Activated CD4-positive, alpha-beta memory T cell treated with anti-CD3 and anti-CD28 coated beads for 36 hours (primary cell): ENCODE measurements at regions of chr11 and their contacts with region 1.

Region 1: DNA sequence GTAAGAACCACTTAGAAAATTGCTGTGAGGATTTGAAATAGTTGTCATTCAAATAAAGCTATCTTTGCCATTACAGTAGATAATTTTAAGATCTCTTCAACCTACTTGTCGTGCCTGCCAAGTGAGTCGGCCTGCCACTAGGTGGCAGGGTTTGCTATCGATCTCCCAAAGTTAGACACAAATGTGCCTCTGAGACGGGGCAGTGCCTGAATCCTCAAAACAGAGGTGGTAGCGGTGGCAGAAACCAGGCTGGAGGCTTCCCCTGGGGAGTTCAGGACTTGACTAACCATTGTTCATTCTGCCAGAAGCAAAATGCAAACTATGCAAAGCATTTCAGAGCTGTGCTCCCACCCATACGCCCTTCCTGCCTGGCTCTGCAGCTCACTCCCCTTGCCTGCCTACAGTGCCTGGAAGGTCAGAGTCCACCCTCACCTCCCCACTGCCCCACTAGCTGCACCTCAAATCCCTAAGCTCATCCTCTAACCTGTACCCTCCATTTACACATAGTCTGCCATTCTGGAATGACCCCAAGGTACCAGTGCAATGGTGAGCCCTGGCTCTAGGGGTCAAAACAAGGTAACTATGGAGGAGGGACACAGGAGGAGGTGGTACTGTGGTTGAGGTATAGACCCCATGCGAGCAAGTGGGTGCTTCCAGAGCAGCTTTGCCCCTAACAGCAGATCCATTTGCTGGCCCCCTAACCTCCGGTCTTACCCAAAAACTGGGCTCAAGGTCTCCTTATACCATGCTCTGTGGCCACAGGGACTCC is 82.1 kb downstream of the C11orf58 start:
- DNase-seq: peak; percentile 87
- H3K4me3 Mint-ChIP-seq: no peak overlapping the region
- H3K27ac Mint-ChIP-seq: no peak overlapping the region
- H3K4me1 Mint-ChIP-seq: peaks cover 2% of the 10 kb centered on the region
- H3K27me3 Mint-ChIP-seq: no peaks in the 10 kb centered on the region

Region 2: DNA sequence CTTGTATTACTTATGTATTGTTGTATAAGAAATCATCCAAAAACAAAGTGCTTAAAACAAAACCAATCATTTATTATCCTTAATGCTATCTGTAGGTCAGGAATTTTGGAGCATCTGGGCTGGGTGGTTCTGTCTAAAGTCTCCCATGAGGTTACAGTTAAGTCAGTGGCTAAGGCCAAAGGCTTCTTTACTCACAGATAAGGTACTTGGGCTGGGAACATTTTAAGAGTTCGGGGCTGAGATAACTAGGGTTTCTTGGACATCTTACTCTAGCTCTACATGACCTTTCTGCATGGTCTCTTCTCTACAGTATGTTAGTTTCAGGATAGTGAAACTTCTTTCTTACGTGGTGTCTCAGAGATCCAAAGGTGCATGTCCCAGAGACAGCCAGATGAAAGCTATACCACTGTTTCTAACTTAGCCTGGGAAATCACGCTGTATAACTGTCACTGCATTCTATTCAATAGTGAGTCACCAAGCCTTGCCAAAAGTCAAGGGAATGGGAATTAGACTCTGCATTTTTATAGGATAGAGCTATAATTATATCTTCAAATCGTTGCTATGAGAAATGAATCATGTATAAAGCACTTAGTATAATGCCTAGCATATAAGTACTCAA is 493.7 kb before region 1 on chr11:
- CTCF ChIA-PET with region 1: no interaction called
- POLR2A ChIA-PET with region 1: no interaction called
- intact Hi-C with region 1: no loop called
- DNase-seq: no peak
- H3K4me3 Mint-ChIP-seq: no peak overlapping the region
- H3K27ac Mint-ChIP-seq: no peak overlapping the region
- H3K4me1 Mint-ChIP-seq: no peaks in the 10 kb centered on the region
- H3K27me3 Mint-ChIP-seq: no peaks in the 10 kb centered on the region

Region 3: GRCh38 chr11:16785520-16786128 is 34.9 kb before region 1 on chr11:
- CTCF ChIA-PET with region 1: interaction called, 25 read pairs
- POLR2A ChIA-PET with region 1: no interaction called
- intact Hi-C with region 1: loop called (anchors 5 kb)
- DNase-seq: peak; percentile 72
- H3K4me3 Mint-ChIP-seq: no peak overlapping the region
- H3K27ac Mint-ChIP-seq: no peak overlapping the region
- H3K4me1 Mint-ChIP-seq: no peaks in the 10 kb centered on the region
- H3K27me3 Mint-ChIP-seq: no peaks in the 10 kb centered on the region

Region 4: GRCh38 chr11:16809886-16810668 is 10.4 kb before region 1 on chr11:
- CTCF ChIA-PET with region 1: interaction called, 25 read pairs
- POLR2A ChIA-PET with region 1: no interaction called
- intact Hi-C with region 1: no loop called
- DNase-seq: no peak
- H3K4me3 Mint-ChIP-seq: no peak overlapping the region
- H3K27ac Mint-ChIP-seq: no peak overlapping the region
- H3K4me1 Mint-ChIP-seq: peaks cover 2% of the 10 kb centered on the region
- H3K27me3 Mint-ChIP-seq: no peaks in the 10 kb centered on the region

Region 5: GRCh38 chr11:16881074-16881709 is 60.7 kb after region 1 on chr11:
- CTCF ChIA-PET with region 1: interaction called, 14 read pairs
- POLR2A ChIA-PET with region 1: no interaction called
- intact Hi-C with region 1: no loop called
- DNase-seq: no peak
- H3K4me3 Mint-ChIP-seq: no peak overlapping the region
- H3K27ac Mint-ChIP-seq: no peak overlapping the region
- H3K4me1 Mint-ChIP-seq: no peaks in the 10 kb centered on the region
- H3K27me3 Mint-ChIP-seq: no peaks in the 10 kb centered on the region

Region 6: GRCh38 chr11:16924826-16925560 is 104.5 kb after region 1 on chr11:
- CTCF ChIA-PET with region 1: interaction called, 15 read pairs
- POLR2A ChIA-PET with region 1: no interaction called
- intact Hi-C with region 1: loop called (anchors 2 kb)
- DNase-seq: no peak
- H3K4me3 Mint-ChIP-seq: peak overlapping the region; percentile 66
- H3K27ac Mint-ChIP-seq: no peak overlapping the region
- H3K4me1 Mint-ChIP-seq: peaks cover 23% of the 10 kb centered on the region
- H3K27me3 Mint-ChIP-seq: peaks cover 38% of the 10 kb centered on the region

Region 7: DNA sequence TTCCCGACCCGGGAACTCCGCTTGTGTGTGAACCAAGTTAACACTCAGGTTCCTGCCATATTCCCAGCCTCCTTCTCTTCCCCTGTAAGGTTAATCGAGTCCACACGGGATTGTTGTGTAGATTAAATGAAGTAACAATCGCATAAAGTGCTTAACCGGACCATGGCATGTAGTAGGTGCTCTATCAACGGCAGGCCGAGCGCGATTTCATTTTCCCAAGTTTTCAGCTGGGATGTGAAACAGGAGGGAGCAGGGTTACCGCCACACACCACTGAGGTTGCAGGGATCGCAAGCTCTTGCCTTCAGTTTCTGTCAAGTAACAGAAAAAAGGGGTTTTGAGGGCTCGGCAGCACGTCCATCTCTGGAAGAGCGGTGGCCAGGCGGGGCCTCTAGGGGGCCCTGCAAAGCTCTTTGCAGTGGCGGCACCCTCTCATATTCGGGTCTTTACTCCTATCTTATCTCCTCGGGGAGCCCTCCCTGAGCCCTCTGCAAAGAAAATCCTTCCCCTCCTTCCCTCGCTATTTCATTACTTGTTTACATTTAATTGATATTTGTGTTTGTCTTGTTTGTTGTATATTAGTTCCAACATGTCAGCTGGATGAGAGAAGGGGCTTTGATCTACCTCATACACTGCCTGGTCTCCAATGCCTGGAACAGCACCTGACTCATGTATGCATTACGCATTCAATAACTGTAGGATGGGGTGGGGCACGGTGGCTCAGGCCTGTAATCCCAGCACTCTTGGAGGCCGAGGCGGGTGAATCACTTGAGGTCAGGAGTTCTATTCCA is 194.5 kb after region 1 on chr11:
- CTCF ChIA-PET with region 1: interaction called, 9 read pairs
- POLR2A ChIA-PET with region 1: no interaction called
- intact Hi-C with region 1: loop called (anchors 1 kb)
- DNase-seq: peak; percentile 38
- H3K4me3 Mint-ChIP-seq: peak overlapping the region; percentile 77
- H3K27ac Mint-ChIP-seq: no peak overlapping the region
- H3K4me1 Mint-ChIP-seq: peaks cover 3% of the 10 kb centered on the region
- H3K27me3 Mint-ChIP-seq: peaks cover 11% of the 10 kb centered on the region